ENCODE measurements at regions of chr3 and their contacts with region 1.

Region 1: DNA sequence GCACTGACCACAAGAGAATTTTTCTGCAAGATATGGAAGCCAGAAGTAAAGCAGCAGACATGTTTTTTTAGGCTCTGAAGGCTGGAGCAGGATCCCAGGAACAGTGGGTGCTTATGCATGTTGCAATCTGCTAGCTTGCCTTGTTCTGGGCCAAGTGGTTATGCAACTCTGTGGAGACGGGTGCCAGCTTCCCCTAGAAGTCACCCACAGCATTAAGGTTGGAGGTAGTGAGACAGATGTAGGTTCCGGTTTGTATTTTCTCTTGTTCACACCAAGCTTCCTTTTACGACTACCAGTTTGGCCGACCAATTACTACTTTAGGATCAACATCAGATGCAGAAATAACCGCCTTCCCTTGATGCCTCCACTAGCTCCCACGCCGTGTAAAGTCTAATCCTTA is 11.1 kb downstream of the DPH3 start:
- DNase-seq: peak; percentile 59 to 85 (median 83)
- ATAC-seq: peak; percentile 92 to 96 (median 93)
- H3K4me3 ChIP-seq: no peak overlapping the region
- H3K27ac ChIP-seq: peak overlapping the region in 1 of 3 donors; percentile 11
- H3K4me1 ChIP-seq: peaks cover 0 to 31% (median 9%) of the 10 kb centered on the region in 4 donors
- H3K27me3 ChIP-seq: no peaks in the 10 kb centered on the region
- CTCF ChIP-seq: no peak
- POLR2A ChIP-seq: no peak

Region 2: GRCh38 chr3:15629860-15630597 is 623.6 kb before region 1 on chr3:
- intact Hi-C with region 1: loop called (anchors 5 to 10 kb)
- DNase-seq: peak in 1 of 3 donors; percentile 67
- ATAC-seq: peak; percentile 93 to 96 (median 96)
- H3K4me3 ChIP-seq: peak overlapping the region in 2 of 3 donors; percentile 6 to 16
- H3K27ac ChIP-seq: peak overlapping the region in 2 of 3 donors; percentile 3 to 13
- H3K4me1 ChIP-seq: peaks cover 0 to 20% (median 7%) of the 10 kb centered on the region in 4 donors
- H3K27me3 ChIP-seq: no peaks in the 10 kb centered on the region
- CTCF ChIP-seq: peak; percentile 73 to 81 (median 78)
- POLR2A ChIP-seq: no peak